HepG2 (cell line): ENCODE measurements at regions of chr4 and their contacts with region 1.

Region 1: GRCh38 chr4:46390355-46391058 is 579 bp upstream of the GABRA2 start:
- DNase-seq: no peak
- ATAC-seq: peak; percentile 33; the same call in 2 of the 3 replicates
- H3K4me3 ChIP-seq: no peak overlapping the region
- H3K27ac ChIP-seq: no peak overlapping the region
- H3K4me1 ChIP-seq: peaks cover 6% of the 10 kb centered on the region; the same call in 1 of the 2 replicates
- H3K27me3 ChIP-seq: peaks cover 0 to 11% of the 10 kb centered on the region in 2 experiments; a peak in 1 of 5 replicates
- CTCF ChIP-seq: no peak
- EP300 ChIP-seq: no peak
- POLR2A ChIP-seq: no peak
- RAD21 ChIP-seq: no peak

Region 2: GRCh38 chr4:46425775-46426400 is 35.4 kb after region 1 on chr4:
- CTCF ChIA-PET with region 1: no interaction called
- POLR2A ChIA-PET with region 1: no interaction called
- in situ Hi-C with region 1: no loop called
- intact Hi-C with region 1: loop called (anchors 2 kb)
- DNase-seq: peak; percentile 28
- ATAC-seq: peak; percentile 51; the same call in 1 of the 3 replicates
- H3K4me3 ChIP-seq: no peak overlapping the region
- H3K27ac ChIP-seq: no peak overlapping the region
- H3K4me1 ChIP-seq: no peaks in the 10 kb centered on the region
- H3K27me3 ChIP-seq: no peaks in the 10 kb centered on the region
- CTCF ChIP-seq: no peak
- EP300 ChIP-seq: no peak
- POLR2A ChIP-seq: no peak
- RAD21 ChIP-seq: no peak